Right cardiac atrium (tissue), 5 donors: ENCODE measurements at regions of chr3 and their contacts with region 1.

Region 1: GRCh38 chr3:158434412-158435038 is 136.5 kb upstream of the MLF1 start:
- DNase-seq: peak in 2 of 3 donors; percentile 44 to 78
- ATAC-seq: peak; percentile 81 to 86
- H3K4me3 ChIP-seq: no peak overlapping the region
- H3K27ac ChIP-seq: no peak overlapping the region
- H3K4me1 ChIP-seq: no peaks in the 10 kb centered on the region
- H3K27me3 ChIP-seq: no peaks in the 10 kb centered on the region

Region 2: GRCh38 chr3:157610876-157611535 is 823.5 kb before region 1 on chr3:
- intact Hi-C with region 1: loop called (anchors 5 to 10 kb)
- DNase-seq: no peak
- ATAC-seq: no peak
- H3K4me3 ChIP-seq: no peak overlapping the region
- H3K27ac ChIP-seq: no peak overlapping the region
- H3K4me1 ChIP-seq: no peaks in the 10 kb centered on the region
- H3K27me3 ChIP-seq: no peaks in the 10 kb centered on the region

Region 3: DNA sequence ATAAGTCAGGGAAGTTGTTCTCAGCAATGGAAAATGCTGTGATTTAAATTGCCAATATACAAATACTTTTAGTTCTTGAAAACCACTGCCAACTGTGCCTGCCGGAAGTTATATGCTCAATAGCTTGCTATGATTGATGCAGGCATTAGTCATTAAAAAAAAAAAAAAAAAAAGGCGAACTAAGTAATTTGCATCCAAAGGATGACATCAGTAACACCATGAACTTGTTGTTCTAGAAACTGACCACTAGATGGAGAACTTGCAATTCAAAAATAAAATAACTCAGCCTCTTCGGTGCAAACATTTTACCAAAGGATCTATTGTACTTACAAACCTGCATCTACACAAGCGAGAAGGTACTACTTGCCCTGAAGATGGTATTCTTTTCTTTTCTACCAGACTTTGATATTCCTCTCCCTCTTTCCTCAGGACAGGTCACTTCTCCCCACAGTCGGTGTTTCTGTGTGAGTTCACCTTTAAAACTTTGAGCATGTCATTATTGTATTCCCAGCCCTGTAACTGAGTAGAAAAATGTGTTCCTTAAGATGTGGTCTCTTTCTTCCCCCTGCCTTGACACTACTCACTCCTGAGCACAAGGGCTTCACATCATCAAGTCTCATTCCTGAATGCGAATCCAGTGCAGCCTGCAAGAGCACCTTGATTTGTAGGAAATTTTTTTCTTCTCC is 816.3 kb before region 1 on chr3:
- intact Hi-C with region 1: loop called (anchors 5 to 10 kb)
- DNase-seq: no peak
- ATAC-seq: peak; percentile 47 to 60
- H3K4me3 ChIP-seq: no peak overlapping the region
- H3K27ac ChIP-seq: no peak overlapping the region
- H3K4me1 ChIP-seq: no peaks in the 10 kb centered on the region
- H3K27me3 ChIP-seq: no peaks in the 10 kb centered on the region